ENCODE measurements at regions of chr1 and their contacts with region 1.

Region 1: GRCh38 chr1:85865213-85865612 is 157.0 kb upstream of the ZNHIT6 start:
- DNase-seq: peak; percentile 12
- ATAC-seq: peak; percentile 50
- H3K4me3 ChIP-seq: no peak overlapping the region
- H3K27ac ChIP-seq: peak overlapping the region; percentile 41; the same call in 1 of the 2 replicates
- H3K4me1 ChIP-seq: peaks cover 2% of the 10 kb centered on the region; the same call in 1 of the 2 replicates
- H3K27me3 ChIP-seq: no peaks in the 10 kb centered on the region
- CTCF ChIP-seq: no peak
- POLR2A ChIP-seq: no peak
- RAD21 ChIP-seq: no peak

Region 2: DNA sequence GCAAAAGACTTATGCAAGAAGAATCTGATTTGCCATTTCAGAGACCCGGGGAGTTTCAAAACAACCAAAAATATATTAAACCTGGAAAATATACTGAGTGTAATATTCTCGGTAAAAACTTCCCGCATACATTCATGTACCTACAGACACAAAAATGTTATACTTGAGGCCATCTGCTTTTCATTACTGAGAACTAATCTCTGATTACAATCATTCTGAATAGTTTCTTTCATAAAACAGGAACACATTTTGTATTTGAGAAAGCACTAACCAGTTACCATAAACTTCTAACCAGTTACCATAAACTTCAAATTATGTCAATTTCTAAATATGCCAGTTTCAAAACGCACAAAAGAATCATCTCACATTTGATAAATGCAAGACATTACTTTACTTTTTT is 164.8 kb before region 1 on chr1:
- CTCF ChIA-PET with region 1: no interaction called
- POLR2A ChIA-PET with region 1: interaction called, 10 read pairs
- dilution Hi-C with region 1: no loop called
- in situ Hi-C with region 1: no loop called
- intact Hi-C with region 1: no loop called
- DNase-seq: no peak
- ATAC-seq: no peak
- H3K4me3 ChIP-seq: no peak overlapping the region
- H3K27ac ChIP-seq: no peak overlapping the region
- H3K4me1 ChIP-seq: peaks cover 4% of the 10 kb centered on the region; the same call in 1 of the 2 replicates
- H3K27me3 ChIP-seq: no peaks in the 10 kb centered on the region
- CTCF ChIP-seq: no peak
- POLR2A ChIP-seq: no peak
- RAD21 ChIP-seq: no peak

Region 3: DNA sequence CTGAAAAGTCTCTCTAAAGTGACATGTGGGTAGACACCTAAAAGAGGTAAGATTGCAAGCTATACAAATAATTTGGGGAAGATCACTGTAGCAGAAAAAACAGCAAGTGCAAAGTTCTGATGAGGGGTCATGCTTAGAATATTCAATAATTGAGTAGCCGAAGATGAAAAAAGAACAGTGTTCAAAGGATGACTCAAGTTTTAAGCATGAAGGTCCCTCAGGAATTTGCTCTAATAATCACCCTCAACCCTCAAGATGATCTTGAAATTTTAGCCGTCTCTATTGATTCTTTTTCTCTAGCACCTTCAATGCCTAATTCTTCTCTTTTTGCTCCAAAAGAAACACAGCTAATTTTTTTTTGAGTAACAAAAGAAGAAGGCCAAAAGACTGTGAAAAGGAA is 33.6 kb after region 1 on chr1:
- CTCF ChIA-PET with region 1: no interaction called
- POLR2A ChIA-PET with region 1: no interaction called
- dilution Hi-C with region 1: no loop called
- in situ Hi-C with region 1: no loop called
- intact Hi-C with region 1: no loop called
- DNase-seq: peak; percentile 17
- ATAC-seq: no peak
- H3K4me3 ChIP-seq: no peak overlapping the region
- H3K27ac ChIP-seq: no peak overlapping the region
- H3K4me1 ChIP-seq: no peaks in the 10 kb centered on the region
- H3K27me3 ChIP-seq: no peaks in the 10 kb centered on the region
- CTCF ChIP-seq: no peak
- POLR2A ChIP-seq: no peak
- RAD21 ChIP-seq: no peak

Region 4: DNA sequence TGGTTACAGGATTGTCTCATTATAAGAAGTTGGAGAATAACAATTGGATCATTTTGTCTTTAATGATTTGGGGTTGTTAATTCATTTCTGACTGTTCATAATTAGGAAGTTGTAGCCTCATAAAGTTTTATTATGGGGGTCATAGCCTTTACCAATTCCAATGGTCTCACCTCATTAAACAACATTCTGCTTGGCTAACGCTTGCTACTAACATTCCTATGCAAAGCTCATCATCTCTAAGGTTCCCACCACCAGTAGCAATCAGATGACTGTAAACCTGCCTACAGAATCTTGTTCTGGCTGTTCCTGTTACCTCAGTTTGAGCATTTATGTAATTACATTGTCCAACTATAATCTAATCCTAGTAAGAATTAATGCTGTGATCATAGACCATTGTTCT is 470.7 kb after region 1 on chr1:
- CTCF ChIA-PET with region 1: no interaction called
- POLR2A ChIA-PET with region 1: no interaction called
- dilution Hi-C with region 1: no loop called
- in situ Hi-C with region 1: no loop called
- intact Hi-C with region 1: no loop called
- DNase-seq: no peak
- ATAC-seq: no peak
- H3K4me3 ChIP-seq: no peak overlapping the region
- H3K27ac ChIP-seq: no peak overlapping the region
- H3K4me1 ChIP-seq: no peaks in the 10 kb centered on the region
- H3K27me3 ChIP-seq: no peaks in the 10 kb centered on the region; the same call in 1 of the 2 replicates
- CTCF ChIP-seq: no peak
- POLR2A ChIP-seq: no peak
- RAD21 ChIP-seq: no peak